Right cardiac atrium (tissue), 5 donors: ENCODE measurements at regions of chr3 and their contacts with region 1.

Region 1: GRCh38 chr3:185552358-185552877 is at the start of gene LIPH:
- DNase-seq: no peak
- ATAC-seq: peak in 1 of 2 donors; percentile 57
- H3K4me3 ChIP-seq: no peak within 1 kb of the TSS
- H3K27ac ChIP-seq: no peak within 1 kb of the TSS
- H3K4me1 ChIP-seq: no peaks in the 10 kb centered on the region
- H3K27me3 ChIP-seq: no peaks in the 10 kb centered on the region
- total RNA-seq, gene LIPH: 0.14 to 0.62 (median 0.31) TPM

Region 2: DNA sequence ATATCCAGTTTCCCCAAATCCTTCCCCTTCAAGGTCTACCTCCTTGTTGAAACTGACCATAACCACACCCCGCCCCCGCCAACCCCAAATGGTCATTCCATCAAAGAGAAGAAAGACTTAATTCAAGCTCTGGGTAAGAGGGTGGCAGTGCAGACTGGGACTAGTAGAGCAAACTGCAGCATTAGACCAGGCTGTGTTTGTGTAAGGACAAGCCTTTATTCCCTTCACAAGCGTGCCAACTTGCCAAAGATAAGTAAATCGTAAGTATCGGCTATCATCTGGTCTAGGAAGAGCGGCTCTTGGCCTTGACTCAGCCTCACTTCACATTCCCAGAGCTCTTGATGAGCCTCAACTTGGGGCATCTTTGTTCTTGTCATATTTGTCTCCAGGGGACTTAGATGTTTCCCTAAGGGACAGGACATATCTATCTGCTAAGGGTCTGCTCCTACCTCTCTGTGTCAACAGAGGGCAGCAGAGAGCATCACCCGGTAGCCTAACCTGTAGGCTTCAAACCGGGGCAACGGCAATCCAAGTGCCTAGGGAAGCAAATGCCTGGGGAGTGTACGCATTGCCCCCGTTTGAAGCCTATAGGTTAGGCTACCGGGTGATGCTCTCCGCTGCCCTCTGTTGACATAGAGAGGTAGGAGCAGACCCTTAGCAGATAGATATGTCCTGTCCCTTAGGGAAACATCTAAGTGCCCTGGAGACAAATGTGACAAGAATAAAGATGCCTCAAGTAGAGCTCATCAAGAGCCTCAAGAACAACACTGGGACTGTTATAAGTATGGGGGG is 198.4 kb before region 1 on chr3:
- intact Hi-C with region 1: loop called in 1 of 4 experiments (anchors 10 kb)
- DNase-seq: peak; percentile 50 to 75 (median 58)
- ATAC-seq: peak; percentile 79 to 88
- H3K4me3 ChIP-seq: no peak overlapping the region
- H3K27ac ChIP-seq: no peak overlapping the region
- H3K4me1 ChIP-seq: no peaks in the 10 kb centered on the region
- H3K27me3 ChIP-seq: no peaks in the 10 kb centered on the region

Region 3: GRCh38 chr3:185508335-185508991 is 44.0 kb before region 1 on chr3:
- intact Hi-C with region 1: loop called in 1 of 4 experiments (anchors 10 kb)
- DNase-seq: peak in 1 of 3 donors; percentile 75
- ATAC-seq: peak; percentile 48 to 64
- H3K4me3 ChIP-seq: no peak overlapping the region
- H3K27ac ChIP-seq: no peak overlapping the region
- H3K4me1 ChIP-seq: no peaks in the 10 kb centered on the region
- H3K27me3 ChIP-seq: no peaks in the 10 kb centered on the region